Activated T-helper 2 cell treated with anti-CD3 and anti-CD28 coated beads, Interferon-gamma antibody, Interleukin-2, Interleukin-4, amounts not matched to agents 10 μg/mL and 5 μg/mL and 100 μg/mL, durations not matched to agents 14 hours and 24 hours and 36 hours (primary cell): ENCODE measurements at regions of chr2 and their contacts with region 1.

Region 1: DNA sequence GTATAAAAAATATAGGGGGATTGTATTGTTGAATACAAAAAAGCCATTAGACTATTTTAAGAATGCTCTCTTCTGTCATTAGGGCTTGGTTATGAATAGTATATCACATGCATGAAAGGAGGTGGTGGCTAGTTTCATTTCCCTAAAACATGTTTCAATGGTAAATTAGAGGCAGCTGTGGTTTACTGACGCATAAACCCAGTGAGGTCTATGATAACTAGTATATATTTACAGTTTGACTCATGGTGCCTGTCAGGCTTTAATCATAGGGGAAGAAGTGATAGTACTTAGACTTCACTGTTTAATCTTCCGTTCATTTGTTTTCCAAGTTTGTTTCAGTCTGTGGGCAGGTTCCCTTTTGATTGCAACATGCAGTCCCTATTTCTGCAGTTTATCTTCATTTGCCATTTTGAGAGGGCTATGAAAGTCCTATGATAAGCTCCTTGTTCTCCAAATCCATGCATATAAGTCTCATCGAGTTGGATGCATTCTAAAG is 55.1 kb upstream of the MAP4K3 start:
- DNase-seq: peak; percentile 20
- H3K4me3 Mint-ChIP-seq: peak overlapping the region; percentile 54
- H3K27ac Mint-ChIP-seq: peak overlapping the region; percentile 85
- H3K4me1 Mint-ChIP-seq: peaks cover 51% of the 10 kb centered on the region
- H3K27me3 Mint-ChIP-seq: peaks cover 9% of the 10 kb centered on the region

Region 2: GRCh38 chr2:39216346-39217191 is 275.6 kb before region 1 on chr2:
- intact Hi-C with region 1: loop called (anchors 5 kb)
- DNase-seq: peak; percentile 87
- H3K4me3 Mint-ChIP-seq: peak overlapping the region; percentile 38
- H3K27ac Mint-ChIP-seq: peak overlapping the region; percentile 88
- H3K4me1 Mint-ChIP-seq: peaks cover 64% of the 10 kb centered on the region
- H3K27me3 Mint-ChIP-seq: no peaks in the 10 kb centered on the region

Region 3: GRCh38 chr2:39356922-39357639 is 135.1 kb before region 1 on chr2:
- intact Hi-C with region 1: loop called (anchors 5 kb)
- DNase-seq: no peak
- H3K4me3 Mint-ChIP-seq: no peak overlapping the region
- H3K27ac Mint-ChIP-seq: peak overlapping the region; percentile 57
- H3K4me1 Mint-ChIP-seq: peaks cover 15% of the 10 kb centered on the region
- H3K27me3 Mint-ChIP-seq: no peaks in the 10 kb centered on the region

Region 4: DNA sequence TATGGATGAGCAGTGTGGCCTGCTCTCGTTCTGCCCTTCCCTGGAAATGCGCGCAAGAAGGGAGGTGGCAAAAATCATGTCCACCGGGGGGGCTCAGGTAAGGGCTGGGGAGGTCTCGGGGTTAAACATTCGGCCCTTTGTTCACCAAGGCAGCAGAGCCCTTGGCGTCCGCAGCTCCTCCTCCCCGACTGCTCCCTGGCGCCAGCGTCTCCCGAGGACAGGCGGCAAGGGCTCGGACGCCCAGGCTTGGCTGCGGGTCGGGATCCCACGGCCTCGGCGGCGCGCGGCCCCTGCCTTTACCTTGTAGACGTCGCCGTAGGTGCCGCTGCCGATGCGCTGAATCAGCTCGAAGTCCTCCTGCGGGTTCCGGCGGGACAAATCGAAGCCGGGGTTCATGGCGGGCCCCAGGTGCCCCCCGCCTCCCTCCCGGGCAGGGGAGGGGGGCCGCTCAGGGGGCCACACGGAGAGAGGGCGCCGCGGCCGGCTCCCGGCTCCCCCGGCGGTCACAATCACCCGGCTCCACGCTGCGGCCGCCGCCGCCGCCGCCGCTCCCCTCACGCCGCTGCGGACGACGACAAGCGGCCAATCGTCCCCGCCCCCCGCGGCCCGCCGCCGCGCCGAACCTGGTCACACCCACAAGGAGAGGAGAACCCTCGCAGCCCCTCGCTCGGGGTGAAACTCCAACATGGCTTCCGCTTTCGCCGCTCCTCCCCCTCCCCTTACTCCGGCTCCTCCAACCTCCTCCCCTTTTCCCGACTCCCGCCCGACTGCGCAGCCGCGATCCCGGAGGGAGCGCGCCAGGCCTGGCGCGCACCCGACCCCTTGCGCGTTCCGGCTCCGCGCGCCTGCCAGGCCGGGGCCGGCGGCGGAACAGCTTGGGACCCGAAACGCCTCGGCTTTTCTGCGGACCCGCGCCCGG is 55.3 kb before region 1 on chr2 and contains the start of gene MAP4K3:
- intact Hi-C with region 1: loop called (anchors 1 kb)
- DNase-seq: peak; percentile 66
- H3K4me3 Mint-ChIP-seq: peak within 1 kb of the TSS; percentile 89
- H3K27ac Mint-ChIP-seq: peak within 1 kb of the TSS; percentile 83
- H3K4me1 Mint-ChIP-seq: peaks cover 41% of the 10 kb centered on the region
- H3K27me3 Mint-ChIP-seq: no peaks in the 10 kb centered on the region
- total RNA-seq, gene MAP4K3: 19.3 and 22.7 TPM in 2 replicates

Region 5: GRCh38 chr2:39469807-39470206 is 22.3 kb before region 1 on chr2:
- intact Hi-C with region 1: loop called (anchors 1 kb)
- DNase-seq: no peak
- H3K4me3 Mint-ChIP-seq: no peak overlapping the region
- H3K27ac Mint-ChIP-seq: no peak overlapping the region
- H3K4me1 Mint-ChIP-seq: peaks cover 28% of the 10 kb centered on the region
- H3K27me3 Mint-ChIP-seq: no peaks in the 10 kb centered on the region

Region 6: GRCh38 chr2:39504790-39505335 is 12.7 kb after region 1 on chr2:
- intact Hi-C with region 1: no loop called
- DNase-seq: no peak
- H3K4me3 Mint-ChIP-seq: no peak overlapping the region
- H3K27ac Mint-ChIP-seq: no peak overlapping the region
- H3K4me1 Mint-ChIP-seq: peaks cover 1% of the 10 kb centered on the region
- H3K27me3 Mint-ChIP-seq: peaks cover 31% of the 10 kb centered on the region

Region 7: GRCh38 chr2:39547811-39548719 is 55.9 kb after region 1 on chr2:
- intact Hi-C with region 1: loop called (anchors 10 kb)
- DNase-seq: no peak
- H3K4me3 Mint-ChIP-seq: no peak overlapping the region
- H3K27ac Mint-ChIP-seq: no peak overlapping the region
- H3K4me1 Mint-ChIP-seq: peaks cover 18% of the 10 kb centered on the region
- H3K27me3 Mint-ChIP-seq: peaks cover 7% of the 10 kb centered on the region

Region 8: DNA sequence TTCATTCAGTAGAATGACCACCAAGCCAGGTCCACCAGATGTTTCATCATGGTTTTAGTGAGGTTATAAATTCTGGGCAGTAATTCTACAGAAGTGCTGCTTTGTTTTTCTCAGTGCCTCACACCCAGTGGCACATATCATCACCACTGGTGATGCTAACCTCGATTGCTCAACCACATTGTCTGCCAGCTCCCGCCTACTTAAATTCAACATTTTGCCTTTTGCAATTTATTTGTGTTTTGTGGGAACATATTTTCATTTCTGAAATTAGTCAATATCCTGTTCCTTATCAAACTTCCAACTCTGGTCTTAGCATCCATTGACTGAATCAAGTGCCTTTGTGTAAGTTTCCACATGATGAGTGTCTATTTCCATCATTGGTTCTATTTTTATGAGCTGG is 111.3 kb after region 1 on chr2:
- intact Hi-C with region 1: loop called (anchors 2 kb)
- DNase-seq: no peak
- H3K4me3 Mint-ChIP-seq: no peak overlapping the region
- H3K27ac Mint-ChIP-seq: peak overlapping the region; percentile 37
- H3K4me1 Mint-ChIP-seq: peaks cover 15% of the 10 kb centered on the region
- H3K27me3 Mint-ChIP-seq: peaks cover 23% of the 10 kb centered on the region

Region 9: DNA sequence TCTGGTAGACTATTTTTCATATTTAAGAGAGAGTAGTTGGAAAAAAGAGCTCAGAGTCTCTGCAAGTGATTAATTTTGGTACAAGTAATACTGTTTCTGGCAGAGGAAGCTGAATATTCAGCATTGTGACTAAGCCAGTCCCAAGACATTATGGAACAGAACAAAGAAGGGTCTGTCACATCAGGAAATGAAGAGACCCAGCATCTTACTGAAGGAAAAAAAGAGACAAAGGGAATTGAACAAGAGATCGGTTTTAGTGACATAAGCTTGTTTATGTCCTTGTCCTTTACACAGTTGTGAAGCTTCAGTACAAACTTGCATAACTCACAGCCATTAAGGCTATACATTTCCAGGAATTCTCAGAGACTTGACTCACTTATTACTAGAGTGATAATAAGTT is 1528.2 kb after region 1 on chr2:
- intact Hi-C with region 1: no loop called
- DNase-seq: no peak
- H3K4me3 Mint-ChIP-seq: no peak overlapping the region
- H3K27ac Mint-ChIP-seq: no peak overlapping the region
- H3K4me1 Mint-ChIP-seq: no peaks in the 10 kb centered on the region
- H3K27me3 Mint-ChIP-seq: no peaks in the 10 kb centered on the region